CD8-positive, alpha-beta T cell (primary cell): ENCODE measurements at regions of chr12 and their contacts with region 1.

Region 1: DNA sequence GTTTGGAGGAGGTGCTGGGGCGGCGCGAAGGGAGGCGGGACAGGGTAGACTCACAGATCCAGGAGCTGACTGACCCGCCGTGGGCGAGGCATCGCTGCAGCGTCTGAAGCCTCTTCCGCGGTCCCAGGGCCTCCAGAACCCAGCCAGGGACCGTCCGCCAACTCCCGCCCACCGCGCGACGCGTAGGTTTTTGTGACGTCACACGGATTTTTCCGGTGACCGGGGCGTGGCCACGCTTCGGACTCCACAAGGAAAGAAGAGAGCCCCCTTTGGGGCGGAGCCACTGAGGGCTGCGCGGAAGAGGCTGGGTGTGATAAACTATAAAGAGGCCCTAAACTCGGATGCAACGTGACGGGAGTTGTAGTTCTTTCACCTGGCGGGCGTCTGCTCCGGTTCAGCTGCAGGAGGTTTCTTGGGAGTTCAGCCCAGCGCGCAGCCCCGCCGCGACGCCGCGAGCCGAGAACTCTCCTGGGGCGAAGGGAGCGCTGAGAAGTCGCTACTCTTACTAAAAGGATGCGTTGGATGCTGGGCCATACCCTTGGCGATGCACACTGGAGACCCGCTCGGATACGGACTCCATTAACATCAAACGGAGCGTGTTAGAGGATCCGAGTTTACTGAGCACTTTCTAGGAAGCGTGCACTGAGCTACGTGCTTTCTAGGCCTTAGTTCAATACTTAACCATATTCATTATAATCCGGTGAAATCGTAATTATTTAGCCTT is at the start of gene AMN1:
- DNase-seq: peak; percentile 97 to 100 (median 98)
- ATAC-seq: peak; percentile 89
- H3K4me3 ChIP-seq: peak within 1 kb of the TSS; percentile 72 to 76
- H3K4me3 Mint-ChIP-seq: peak within 1 kb of the TSS; percentile 99
- H3K27ac ChIP-seq: peak within 1 kb of the TSS; percentile 91 to 92
- H3K27ac Mint-ChIP-seq: peak within 1 kb of the TSS; percentile 99
- H3K4me1 ChIP-seq: peaks cover 34% of the 10 kb centered on the region
- H3K4me1 Mint-ChIP-seq: peaks cover 65% of the 10 kb centered on the region
- H3K27me3 ChIP-seq: no peaks in the 10 kb centered on the region
- H3K27me3 Mint-ChIP-seq: no peaks in the 10 kb centered on the region
- CTCF ChIP-seq: no peak
- total RNA-seq, gene AMN1: 5.9 to 6.2 TPM

Region 2: GRCh38 chr12:30754709-30755394 is 974.2 kb before region 1 on chr12 and contains the start of gene CAPRIN2:
- CTCF ChIA-PET with region 1: no interaction called
- POLR2A ChIA-PET with region 1: no interaction called
- intact Hi-C with region 1: loop called in 1 of 2 experiments (anchors 10 kb)
- DNase-seq: peak; percentile 89 to 98 (median 93)
- ATAC-seq: peak; percentile 90
- H3K4me3 ChIP-seq: peak within 1 kb of the TSS; percentile 69 to 74
- H3K4me3 Mint-ChIP-seq: peak within 1 kb of the TSS; percentile 92
- H3K27ac ChIP-seq: peak within 1 kb of the TSS; percentile 66 to 69
- H3K27ac Mint-ChIP-seq: peak within 1 kb of the TSS; percentile 86
- H3K4me1 ChIP-seq: peaks cover 19% of the 10 kb centered on the region
- H3K4me1 Mint-ChIP-seq: peaks cover 44% of the 10 kb centered on the region
- H3K27me3 ChIP-seq: no peaks in the 10 kb centered on the region
- H3K27me3 Mint-ChIP-seq: no peaks in the 10 kb centered on the region
- CTCF ChIP-seq: no peak
- total RNA-seq, gene CAPRIN2: 16.2 to 17.4 TPM

Region 3: GRCh38 chr12:31669020-31669419 is 60.1 kb before region 1 on chr12:
- CTCF ChIA-PET with region 1: no interaction called
- POLR2A ChIA-PET with region 1: no interaction called
- intact Hi-C with region 1: no loop called
- DNase-seq: no peak
- ATAC-seq: no peak
- H3K4me3 ChIP-seq: no peak overlapping the region
- H3K4me3 Mint-ChIP-seq: no peak overlapping the region
- H3K27ac ChIP-seq: no peak overlapping the region
- H3K27ac Mint-ChIP-seq: no peak overlapping the region
- H3K4me1 ChIP-seq: no peaks in the 10 kb centered on the region
- H3K4me1 Mint-ChIP-seq: no peaks in the 10 kb centered on the region
- H3K27me3 ChIP-seq: no peaks in the 10 kb centered on the region
- H3K27me3 Mint-ChIP-seq: no peaks in the 10 kb centered on the region
- CTCF ChIP-seq: no peak

Region 4: GRCh38 chr12:31682136-31682962 is 46.7 kb before region 1 on chr12:
- CTCF ChIA-PET with region 1: interaction called, 5 read pairs
- POLR2A ChIA-PET with region 1: interaction called, 9 read pairs
- intact Hi-C with region 1: loop called (anchors 2 to 5 kb)
- DNase-seq: peak; percentile 46 to 89 (median 66)
- ATAC-seq: peak; percentile 98
- H3K4me3 ChIP-seq: no peak overlapping the region
- H3K4me3 Mint-ChIP-seq: peak overlapping the region; percentile 13
- H3K27ac ChIP-seq: peak overlapping the region in 1 of 2 experiments; percentile 31
- H3K27ac Mint-ChIP-seq: peak overlapping the region; percentile 75
- H3K4me1 ChIP-seq: no peaks in the 10 kb centered on the region
- H3K4me1 Mint-ChIP-seq: peaks cover 9% of the 10 kb centered on the region
- H3K27me3 ChIP-seq: no peaks in the 10 kb centered on the region
- H3K27me3 Mint-ChIP-seq: no peaks in the 10 kb centered on the region
- CTCF ChIP-seq: peak; percentile 82

Region 5: DNA sequence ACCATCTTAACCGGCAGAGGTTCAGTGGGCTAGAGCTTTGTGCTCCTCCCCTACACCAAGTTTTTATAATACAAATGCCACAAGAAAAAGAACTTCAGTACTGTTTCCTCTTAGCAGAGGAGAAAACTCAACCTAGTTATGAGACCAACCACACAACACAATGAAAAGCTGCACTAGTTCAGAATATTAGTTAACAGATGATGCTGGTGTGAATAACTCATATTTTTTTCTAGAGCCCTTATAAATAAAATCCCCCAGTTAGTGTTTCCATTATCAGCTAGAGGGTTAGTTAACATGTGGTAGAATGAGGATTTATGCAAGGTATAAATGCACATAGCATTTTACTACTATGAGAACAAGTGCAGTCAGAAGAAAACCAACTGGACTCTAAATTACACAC is 61.7 kb after region 1 on chr12:
- CTCF ChIA-PET with region 1: no interaction called
- POLR2A ChIA-PET with region 1: interaction called, 10 read pairs
- intact Hi-C with region 1: no loop called
- DNase-seq: peak in 1 of 9 experiments; percentile 35
- ATAC-seq: peak; percentile 31
- H3K4me3 ChIP-seq: no peak overlapping the region
- H3K4me3 Mint-ChIP-seq: peak overlapping the region; percentile 24
- H3K27ac ChIP-seq: peak overlapping the region in 1 of 2 experiments; percentile 33
- H3K27ac Mint-ChIP-seq: peak overlapping the region; percentile 82
- H3K4me1 ChIP-seq: peaks cover 24% of the 10 kb centered on the region
- H3K4me1 Mint-ChIP-seq: peaks cover 38% of the 10 kb centered on the region
- H3K27me3 ChIP-seq: no peaks in the 10 kb centered on the region
- H3K27me3 Mint-ChIP-seq: no peaks in the 10 kb centered on the region
- CTCF ChIP-seq: no peak

Region 6: DNA sequence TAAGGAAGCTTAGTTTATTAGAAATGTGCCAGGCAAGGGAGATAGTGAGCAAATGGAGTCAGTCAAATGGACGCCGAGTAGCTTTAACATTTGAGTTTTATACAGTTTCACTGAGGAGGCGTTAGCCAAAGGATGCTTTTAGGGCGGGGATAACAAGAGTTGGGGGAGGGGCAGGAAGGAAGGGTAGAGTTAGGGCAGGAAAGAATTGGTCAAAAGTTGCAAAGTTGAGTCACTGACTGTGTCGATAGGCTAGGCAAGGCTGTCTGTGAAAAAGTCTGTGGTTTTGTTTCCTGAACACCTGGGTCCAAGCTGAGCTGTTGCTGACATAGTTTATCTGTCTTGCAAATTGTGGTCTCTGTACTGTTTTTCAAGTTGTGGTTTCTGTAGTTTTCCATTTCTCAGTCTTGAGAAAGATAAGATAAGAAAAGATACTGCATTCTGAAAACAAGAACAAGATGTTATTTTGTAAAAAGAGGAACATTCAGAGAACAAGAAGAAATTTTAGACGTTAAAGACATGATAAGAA is 167.5 kb after region 1 on chr12:
- CTCF ChIA-PET with region 1: interaction called, 3 read pairs
- POLR2A ChIA-PET with region 1: interaction called, 25 read pairs
- intact Hi-C with region 1: loop called (anchors 1 to 2 kb)
- DNase-seq: peak; percentile 70 to 98 (median 85)
- ATAC-seq: peak; percentile 93
- H3K4me3 ChIP-seq: no peak overlapping the region
- H3K4me3 Mint-ChIP-seq: peak overlapping the region; percentile 56
- H3K27ac ChIP-seq: peak overlapping the region; percentile 64 to 79
- H3K27ac Mint-ChIP-seq: peak overlapping the region; percentile 96
- H3K4me1 ChIP-seq: peaks cover 70% of the 10 kb centered on the region
- H3K4me1 Mint-ChIP-seq: peaks cover 52% of the 10 kb centered on the region
- H3K27me3 ChIP-seq: no peaks in the 10 kb centered on the region
- H3K27me3 Mint-ChIP-seq: no peaks in the 10 kb centered on the region
- CTCF ChIP-seq: no peak

Region 7: DNA sequence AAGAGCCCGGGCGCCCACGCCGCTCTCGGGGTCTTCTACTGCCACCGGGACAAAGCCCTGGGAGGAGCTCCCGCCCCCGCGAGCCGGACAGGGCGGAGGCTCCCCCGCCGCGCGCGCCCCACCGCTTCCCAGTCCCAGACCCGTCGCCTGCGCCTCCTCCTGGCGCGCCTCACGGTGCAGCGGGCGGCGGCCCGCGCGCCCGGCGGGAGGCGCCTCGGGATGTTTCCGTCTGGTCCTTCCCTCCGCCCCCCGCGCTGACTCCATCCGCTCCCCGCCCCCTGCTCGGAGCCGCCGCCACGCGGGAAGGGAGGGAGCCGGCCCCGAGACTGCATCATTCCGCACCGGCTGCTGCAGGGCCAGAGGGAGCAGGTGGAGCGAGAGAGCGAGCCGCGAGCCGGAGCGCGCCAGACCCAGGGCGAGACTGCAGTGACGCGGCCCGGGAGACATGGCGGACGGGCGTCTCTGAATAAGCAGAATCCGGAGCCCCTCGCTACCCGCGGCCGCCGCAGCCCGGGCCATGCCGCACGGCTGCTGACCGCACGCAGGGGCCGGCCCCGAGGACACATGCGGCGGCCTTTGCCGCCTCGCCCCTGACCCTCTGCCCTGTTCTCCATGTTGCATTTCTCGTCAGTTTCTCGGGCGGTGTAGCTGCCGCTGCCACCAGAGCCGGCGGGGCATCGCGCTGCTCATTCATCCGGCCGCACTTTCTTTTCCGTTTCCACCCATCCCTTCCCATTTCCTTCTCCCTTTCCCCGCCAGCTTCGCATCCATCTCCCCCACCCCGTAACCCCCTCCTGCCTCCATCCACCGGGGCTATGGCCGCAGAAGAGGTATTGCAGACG is 377.7 kb after region 1 on chr12 and contains the start of gene BICD1:
- CTCF ChIA-PET with region 1: no interaction called
- POLR2A ChIA-PET with region 1: no interaction called
- intact Hi-C with region 1: loop called in 1 of 2 experiments (anchors 5 kb)
- DNase-seq: peak; percentile 32 to 85 (median 74)
- ATAC-seq: peak; percentile 85
- H3K4me3 ChIP-seq: peak within 1 kb of the TSS; percentile 55 to 84
- H3K4me3 Mint-ChIP-seq: peak within 1 kb of the TSS; percentile 88
- H3K27ac ChIP-seq: peak within 1 kb of the TSS; percentile 16 to 61
- H3K27ac Mint-ChIP-seq: peak within 1 kb of the TSS; percentile 88
- H3K4me1 ChIP-seq: peaks cover 17% of the 10 kb centered on the region
- H3K4me1 Mint-ChIP-seq: peaks cover 30% of the 10 kb centered on the region
- H3K27me3 ChIP-seq: no peaks in the 10 kb centered on the region
- H3K27me3 Mint-ChIP-seq: no peaks in the 10 kb centered on the region
- CTCF ChIP-seq: peak; percentile 17
- total RNA-seq, gene BICD1: 7.0 to 7.2 TPM